SK-MEL-5 (cell line): ENCODE measurements at regions of chr13 and their contacts with region 1.

Region 1: DNA sequence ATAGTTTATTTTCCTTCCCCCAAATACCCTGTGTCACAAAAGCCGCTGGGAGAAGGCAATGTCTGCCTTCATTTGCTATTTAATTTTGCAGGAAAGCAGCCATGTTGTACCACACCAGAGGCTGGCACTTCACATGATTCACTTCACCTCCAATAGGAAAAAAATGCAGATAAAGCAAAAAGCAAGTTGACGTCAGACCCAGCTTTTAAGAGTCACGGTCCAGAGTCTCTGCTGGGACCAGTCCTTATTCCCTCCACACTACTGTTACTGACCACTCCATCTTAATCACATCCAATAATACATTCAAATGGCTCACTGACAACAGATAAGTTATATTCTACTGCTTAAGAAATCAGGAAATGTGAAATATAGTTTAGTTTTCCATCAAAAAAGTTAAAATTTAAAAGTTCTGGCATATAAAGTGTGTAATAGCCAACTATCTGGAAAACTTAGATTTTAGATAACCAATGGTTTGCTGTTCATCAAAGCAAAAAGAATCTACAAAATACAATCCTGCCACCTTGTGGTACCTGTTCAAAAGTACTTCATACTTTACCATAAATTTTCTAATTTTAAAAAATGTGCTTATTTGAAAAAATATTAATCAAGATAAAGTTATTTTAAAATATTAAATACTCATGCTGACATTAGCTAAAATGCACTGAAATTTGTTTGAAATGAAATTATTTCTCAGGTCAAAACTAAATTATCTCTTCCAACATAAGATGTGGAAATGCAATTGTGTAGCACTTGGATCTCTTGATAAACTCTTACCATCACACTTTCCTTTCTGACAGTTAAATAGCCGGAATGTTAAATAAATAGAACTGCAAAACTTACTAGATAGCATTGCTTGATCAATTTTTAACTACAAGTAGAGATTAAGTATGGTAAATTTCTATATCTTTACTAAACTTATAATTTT is 97.3 kb downstream of the SERP2 start:
- DNase-seq: peak; percentile 59

Region 2: DNA sequence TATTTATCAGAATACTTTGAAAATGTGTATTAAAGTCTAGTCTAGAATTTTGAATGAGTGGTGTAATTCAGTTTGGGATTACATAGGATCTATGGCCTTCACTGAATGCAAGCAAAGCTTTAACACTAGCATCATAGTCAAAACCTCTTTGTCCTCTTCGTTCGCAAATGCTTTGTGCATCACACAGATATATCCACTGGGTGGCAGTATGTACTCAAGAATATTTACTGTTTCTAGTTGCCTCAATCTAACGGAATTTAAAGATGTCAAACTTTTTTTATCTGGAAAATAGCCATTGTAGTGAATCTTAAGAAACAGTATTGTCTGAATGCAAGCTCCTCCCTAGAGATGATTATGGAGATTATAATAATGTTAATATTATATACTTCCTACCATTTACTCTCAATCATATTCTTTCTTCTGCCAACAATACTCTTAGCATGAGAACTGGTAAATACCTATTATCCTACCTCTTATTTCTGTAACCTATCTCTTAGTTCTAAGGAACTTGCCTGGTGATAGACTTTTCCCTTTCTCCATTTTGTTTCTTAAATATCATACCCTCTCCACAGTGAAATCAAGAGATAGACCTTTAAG is 565.4 kb before region 1 on chr13:
- in situ Hi-C with region 1: loop called (anchors 25 kb)
- DNase-seq: peak; percentile 83

Region 3: GRCh38 chr13:44312898-44313551 is 157.9 kb before region 1 on chr13:
- in situ Hi-C with region 1: no loop called
- DNase-seq: no peak